PC-9 (cell line): ENCODE measurements at regions of chr2 and their contacts with region 1.

Region 1: DNA sequence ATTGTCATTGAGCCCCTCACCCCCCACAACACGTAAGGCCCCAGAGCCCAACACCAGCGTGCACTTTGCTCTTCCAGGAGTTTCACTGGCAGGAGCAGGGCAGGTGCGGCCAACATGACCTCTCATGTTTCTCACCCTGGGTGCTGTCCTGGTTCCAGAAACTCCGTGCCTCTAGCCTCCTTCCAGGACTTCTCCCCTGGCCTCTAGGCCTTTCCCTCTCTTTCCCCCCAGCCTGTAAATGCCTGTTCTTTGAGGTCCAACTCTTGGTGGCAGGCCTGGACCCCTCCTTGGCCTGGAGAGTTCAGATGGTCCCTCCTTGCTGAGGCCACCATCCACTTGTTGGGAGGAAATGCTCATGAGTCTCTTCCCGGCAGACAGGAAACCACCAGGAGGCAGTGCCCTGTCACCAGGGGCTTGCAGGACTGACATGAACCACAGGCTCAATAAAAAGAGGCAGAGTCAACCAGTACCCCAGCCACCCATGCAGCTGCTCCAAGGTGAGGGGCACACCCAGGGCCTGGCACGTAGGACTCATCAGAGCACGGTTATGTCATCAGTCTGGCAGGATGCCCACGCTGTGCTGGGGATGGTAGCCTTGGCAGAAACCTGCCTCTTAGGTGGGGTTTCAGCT is 1.5 kb downstream of the MALL start:
- DNase-seq: peak; percentile 70 to 83
- H3K4me3 ChIP-seq: peak overlapping the region; percentile 70
- H3K27ac ChIP-seq: peak overlapping the region; percentile 80
- H3K4me1 ChIP-seq: peaks cover 51% of the 10 kb centered on the region
- H3K27me3 ChIP-seq: no peaks in the 10 kb centered on the region
- CTCF ChIP-seq: peak; percentile 51; the same call in 1 of the 2 replicates

Region 2: DNA sequence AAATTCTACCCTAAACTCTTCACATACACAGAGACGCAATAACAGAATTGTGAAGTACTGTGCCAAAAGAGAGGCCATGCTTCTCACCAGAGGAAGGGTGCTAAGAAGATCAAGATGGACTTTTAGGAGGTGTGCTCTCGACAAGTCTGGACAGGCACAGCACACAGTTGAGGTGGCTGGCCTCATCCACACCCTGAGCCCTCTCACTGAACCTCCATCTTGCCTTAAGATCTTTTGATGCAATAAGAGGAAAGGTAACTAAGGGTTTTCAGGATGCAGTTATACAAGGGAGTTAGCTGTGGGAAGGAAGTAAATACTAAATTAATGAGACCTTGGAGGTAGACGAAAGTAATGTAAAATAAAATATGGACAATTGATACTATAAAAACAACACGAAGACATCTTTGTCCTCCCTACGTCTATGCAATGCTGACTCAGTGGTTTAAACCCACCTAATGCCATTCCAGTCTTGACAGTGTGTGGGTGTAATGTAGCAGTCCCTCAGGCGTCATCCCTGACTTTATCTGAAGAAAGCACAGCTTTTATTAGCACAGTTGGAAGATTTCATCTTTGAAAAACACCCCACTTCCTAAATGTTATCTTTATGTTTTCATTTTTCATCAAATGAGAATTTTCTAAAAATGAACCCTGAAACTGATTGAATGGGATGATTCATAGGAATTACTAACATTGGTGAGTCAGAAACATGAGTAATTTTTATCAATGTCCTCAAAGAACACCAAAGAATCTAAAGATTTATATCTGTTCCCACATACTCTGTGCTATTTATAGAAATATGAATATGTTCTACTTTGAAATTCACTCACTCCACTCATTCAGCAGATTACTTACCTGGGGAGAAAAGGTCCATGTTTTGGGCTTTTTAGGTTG is 35.5 kb after region 1 on chr2:
- CTCF ChIA-PET with region 1: no interaction called
- POLR2A ChIA-PET with region 1: no interaction called
- intact Hi-C with region 1: loop called (anchors 2 kb)
- DNase-seq: peak; percentile 34 to 92
- H3K4me3 ChIP-seq: peak overlapping the region; percentile 14; the same call in 1 of the 2 replicates
- H3K27ac ChIP-seq: peak overlapping the region; percentile 95
- H3K4me1 ChIP-seq: peaks cover 24% of the 10 kb centered on the region
- H3K27me3 ChIP-seq: no peaks in the 10 kb centered on the region
- CTCF ChIP-seq: no peak

Region 3: DNA sequence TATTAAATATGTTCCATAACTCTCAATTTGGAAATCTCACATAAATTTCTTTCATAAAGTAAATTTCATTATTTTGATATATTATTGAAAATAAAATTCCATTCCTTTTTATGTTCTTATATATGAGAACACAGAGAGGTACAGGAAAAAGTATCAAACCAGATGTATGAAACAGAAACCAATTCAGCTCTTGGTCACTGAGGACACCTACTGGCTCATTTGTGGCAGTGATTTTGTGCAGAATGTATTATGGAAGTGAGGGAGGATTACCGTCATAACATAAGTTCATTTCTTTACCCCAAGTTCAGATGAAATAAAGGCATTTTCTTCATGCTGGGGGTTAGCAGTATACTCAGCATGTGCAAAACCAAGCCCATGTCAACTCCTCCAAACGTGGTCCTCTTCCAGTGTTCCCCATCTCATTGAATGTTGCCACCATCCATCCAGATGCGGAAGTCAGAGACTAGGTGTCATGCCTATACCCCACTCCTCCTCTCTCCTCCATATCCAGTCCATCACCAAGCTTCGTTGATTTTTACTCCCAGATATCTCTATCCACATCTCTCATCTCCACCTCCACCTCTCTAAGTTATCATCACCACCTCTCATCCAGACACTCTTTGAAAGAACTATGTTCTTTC is 43.2 kb after region 1 on chr2:
- CTCF ChIA-PET with region 1: interaction called, 7 read pairs
- POLR2A ChIA-PET with region 1: interaction called, 3 read pairs
- intact Hi-C with region 1: loop called (anchors 2 kb)
- DNase-seq: peak; percentile 31 to 58
- H3K4me3 ChIP-seq: no peak overlapping the region
- H3K27ac ChIP-seq: peak overlapping the region; percentile 65
- H3K4me1 ChIP-seq: peaks cover 10% of the 10 kb centered on the region
- H3K27me3 ChIP-seq: no peaks in the 10 kb centered on the region
- CTCF ChIP-seq: peak; percentile 88